Activated CD8-positive, alpha-beta memory T cell treated with anti-CD3 and anti-CD28 coated beads, Interleukin-2, amount 10 ng/mL, durations not matched to agents 7 days and 5 days (primary cell): ENCODE measurements at regions of chr1 and their contacts with region 1.

Region 1: DNA sequence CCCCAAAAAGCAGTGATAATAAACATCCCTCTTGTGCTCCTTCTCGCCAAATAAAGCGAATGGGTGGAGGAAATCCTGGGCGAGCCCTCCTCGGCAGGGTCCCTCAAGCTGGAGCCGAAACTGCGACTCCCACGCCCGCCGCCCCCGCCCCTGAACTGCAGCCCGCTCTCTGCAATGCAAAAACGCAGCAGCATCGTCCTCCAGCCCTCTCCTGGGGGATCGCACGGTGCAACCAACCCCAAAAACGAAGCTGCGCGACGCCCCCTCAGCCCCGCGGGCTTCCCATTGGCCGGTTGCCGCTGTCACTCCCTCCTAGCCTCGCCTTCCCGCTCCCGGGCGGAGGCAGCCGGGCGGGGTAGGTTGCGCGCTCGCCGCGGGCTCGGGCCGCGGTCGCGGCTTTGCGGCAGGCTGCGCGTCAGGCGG is at the start of gene TMCC2:
- DNase-seq: peak; percentile 90
- ATAC-seq: peak; percentile 95
- H3K4me3 Mint-ChIP-seq: peak within 1 kb of the TSS; percentile 91
- H3K27ac Mint-ChIP-seq: peak within 1 kb of the TSS; percentile 75
- H3K4me1 Mint-ChIP-seq: peaks cover 44% of the 10 kb centered on the region
- H3K27me3 Mint-ChIP-seq: peaks cover 48% of the 10 kb centered on the region
- total RNA-seq, gene TMCC2: 2.6 to 5.3 TPM

Region 2: GRCh38 chr1:204431310-204432165 is 796.1 kb before region 1 on chr1:
- CTCF ChIA-PET with region 1: no interaction called
- DNase-seq: peak; percentile 85
- ATAC-seq: peak; percentile 88
- H3K4me3 Mint-ChIP-seq: no peak overlapping the region
- H3K27ac Mint-ChIP-seq: peak overlapping the region; percentile 20
- H3K4me1 Mint-ChIP-seq: no peaks in the 10 kb centered on the region
- H3K27me3 Mint-ChIP-seq: no peaks in the 10 kb centered on the region

Region 3: DNA sequence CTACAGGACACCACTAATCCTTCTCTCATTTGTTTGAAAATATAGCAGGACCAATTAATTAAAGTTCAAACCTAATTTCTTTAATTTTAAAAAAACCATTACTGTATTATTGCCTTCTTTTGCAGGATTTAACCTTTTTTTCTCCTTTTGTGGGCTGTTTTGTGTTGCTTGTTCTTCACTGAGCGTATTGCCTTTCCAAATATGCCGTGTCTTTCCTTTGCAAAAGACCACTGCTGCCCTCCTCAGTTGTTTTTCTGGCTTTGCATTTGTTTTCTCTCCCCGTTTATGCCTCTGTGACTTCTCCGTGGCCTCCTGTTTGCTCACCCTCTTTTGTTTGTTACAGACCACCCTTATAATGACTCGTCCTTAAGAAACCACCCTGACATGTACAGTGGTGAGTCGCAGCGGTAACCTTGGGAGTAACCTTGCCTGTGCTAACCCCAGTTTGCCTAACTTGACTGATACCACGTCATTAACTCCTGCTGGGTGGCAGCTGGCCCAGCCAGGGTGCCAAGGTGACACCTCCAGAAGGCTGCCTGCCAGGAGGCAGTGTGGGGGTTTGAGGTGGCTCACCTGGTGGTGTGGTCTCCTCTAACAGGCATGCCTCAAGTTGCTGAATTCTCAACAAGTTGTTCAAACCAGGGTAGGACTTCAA is 265.7 kb before region 1 on chr1:
- CTCF ChIA-PET with region 1: no interaction called
- DNase-seq: no peak
- ATAC-seq: no peak
- H3K4me3 Mint-ChIP-seq: no peak overlapping the region
- H3K27ac Mint-ChIP-seq: no peak overlapping the region
- H3K4me1 Mint-ChIP-seq: no peaks in the 10 kb centered on the region
- H3K27me3 Mint-ChIP-seq: peaks cover 56% of the 10 kb centered on the region

Region 4: GRCh38 chr1:205121660-205122488 is 105.7 kb before region 1 on chr1 and contains the start of gene RBBP5:
- CTCF ChIA-PET with region 1: interaction called, 28 read pairs
- DNase-seq: peak; percentile 97
- ATAC-seq: peak; percentile 96
- H3K4me3 Mint-ChIP-seq: peak within 1 kb of the TSS; percentile 98
- H3K27ac Mint-ChIP-seq: peak within 1 kb of the TSS; percentile 96
- H3K4me1 Mint-ChIP-seq: peaks cover 40% of the 10 kb centered on the region
- H3K27me3 Mint-ChIP-seq: no peaks in the 10 kb centered on the region
- total RNA-seq, gene RBBP5: 22.8 to 23.0 TPM

Region 5: DNA sequence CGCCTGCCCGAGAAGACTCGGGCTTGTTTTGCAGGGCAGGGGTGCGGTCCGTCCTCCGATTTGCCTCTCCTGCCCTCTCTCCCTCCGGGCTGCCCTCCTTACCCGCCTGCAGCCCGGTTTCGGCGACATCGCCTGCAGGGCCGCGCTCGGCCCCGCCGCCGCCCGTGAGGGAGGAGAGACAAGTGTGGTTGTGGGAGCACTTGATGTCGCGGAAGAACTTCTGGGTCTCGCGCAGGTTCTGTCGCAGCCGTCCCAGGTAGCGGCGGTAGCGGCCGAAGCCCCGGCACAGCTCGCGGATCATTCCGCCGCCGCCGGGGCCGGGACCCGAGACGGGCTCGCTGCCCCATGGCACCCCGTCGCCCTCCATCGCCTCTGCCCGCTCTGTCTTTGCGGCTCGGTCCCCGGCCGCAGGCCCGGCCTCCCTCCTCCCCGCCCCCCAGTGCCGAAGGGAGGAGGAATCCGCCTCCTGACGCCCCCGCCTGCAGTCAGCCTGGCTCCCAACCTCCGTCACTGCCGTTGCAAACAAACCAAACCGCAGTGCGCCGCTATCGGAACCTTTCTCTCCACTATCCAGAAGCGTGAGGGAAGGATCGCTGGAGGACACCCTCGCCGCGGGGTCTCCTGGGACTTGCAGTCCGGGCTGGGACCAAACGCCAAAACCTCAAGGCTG is 16.3 kb before region 1 on chr1 and contains the start of gene DSTYK:
- CTCF ChIA-PET with region 1: interaction called, 14 read pairs
- DNase-seq: peak; percentile 95
- ATAC-seq: peak; percentile 90
- H3K4me3 Mint-ChIP-seq: peak within 1 kb of the TSS; percentile 89
- H3K27ac Mint-ChIP-seq: peak within 1 kb of the TSS; percentile 88
- H3K4me1 Mint-ChIP-seq: peaks cover 50% of the 10 kb centered on the region
- H3K27me3 Mint-ChIP-seq: no peaks in the 10 kb centered on the region
- total RNA-seq, gene DSTYK: 8.7 to 11.6 TPM

Region 6: DNA sequence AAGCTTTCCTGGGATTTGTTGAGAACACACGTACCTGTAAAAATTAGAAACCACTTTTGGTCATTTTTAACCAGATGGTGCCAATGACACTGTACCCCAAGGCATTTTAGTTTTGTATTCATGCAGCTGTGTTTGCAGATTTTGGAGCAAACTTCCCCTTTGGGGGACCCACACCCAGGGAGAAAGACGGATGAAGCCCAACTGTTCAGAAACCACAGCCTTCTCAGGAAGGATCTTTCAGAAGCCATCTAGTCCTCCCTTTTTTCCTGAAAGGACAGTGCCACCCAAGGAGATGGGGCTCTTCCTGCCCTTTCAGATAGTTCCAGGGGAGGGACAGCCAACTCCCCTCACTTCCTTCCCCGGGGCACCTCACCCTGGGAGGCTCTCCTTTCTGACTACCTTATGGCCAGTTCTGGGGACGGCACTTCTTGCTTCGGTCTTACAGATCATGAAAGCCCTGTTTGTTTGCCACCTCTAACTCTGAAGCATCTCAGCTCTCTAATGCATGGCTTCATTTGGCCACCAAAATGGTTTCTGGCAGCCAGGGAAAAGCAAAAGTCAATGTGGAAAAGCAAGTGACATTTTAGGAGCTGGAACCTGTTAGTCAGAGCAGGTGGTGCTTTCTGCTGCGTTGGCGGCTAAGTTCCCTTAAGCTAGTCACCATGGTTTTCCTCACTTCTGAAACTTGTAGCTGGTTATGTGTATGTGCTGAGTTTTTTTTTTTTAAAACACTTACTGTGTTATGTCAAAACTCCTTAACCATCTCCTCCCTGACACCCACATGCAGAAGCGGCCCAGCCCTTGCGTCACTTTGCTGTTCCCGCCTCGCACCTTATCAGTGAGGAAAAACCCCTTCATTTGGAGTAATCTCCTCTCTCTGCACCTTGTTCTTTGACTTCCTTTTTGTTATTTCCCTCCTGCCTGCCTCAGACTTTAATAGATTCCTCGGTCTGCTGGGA is 10.2 kb after region 1 on chr1:
- CTCF ChIA-PET with region 1: interaction called, 20 read pairs
- DNase-seq: peak; percentile 39
- ATAC-seq: no peak
- H3K4me3 Mint-ChIP-seq: no peak overlapping the region
- H3K27ac Mint-ChIP-seq: no peak overlapping the region
- H3K4me1 Mint-ChIP-seq: peaks cover 11% of the 10 kb centered on the region
- H3K27me3 Mint-ChIP-seq: peaks cover 21% of the 10 kb centered on the region

Region 7: GRCh38 chr1:205243350-205244191 is 16.0 kb after region 1 on chr1:
- CTCF ChIA-PET with region 1: interaction called, 22 read pairs
- DNase-seq: no peak
- ATAC-seq: no peak
- H3K4me3 Mint-ChIP-seq: no peak overlapping the region
- H3K27ac Mint-ChIP-seq: no peak overlapping the region
- H3K4me1 Mint-ChIP-seq: peaks cover 19% of the 10 kb centered on the region
- H3K27me3 Mint-ChIP-seq: peaks cover 5% of the 10 kb centered on the region

Region 8: DNA sequence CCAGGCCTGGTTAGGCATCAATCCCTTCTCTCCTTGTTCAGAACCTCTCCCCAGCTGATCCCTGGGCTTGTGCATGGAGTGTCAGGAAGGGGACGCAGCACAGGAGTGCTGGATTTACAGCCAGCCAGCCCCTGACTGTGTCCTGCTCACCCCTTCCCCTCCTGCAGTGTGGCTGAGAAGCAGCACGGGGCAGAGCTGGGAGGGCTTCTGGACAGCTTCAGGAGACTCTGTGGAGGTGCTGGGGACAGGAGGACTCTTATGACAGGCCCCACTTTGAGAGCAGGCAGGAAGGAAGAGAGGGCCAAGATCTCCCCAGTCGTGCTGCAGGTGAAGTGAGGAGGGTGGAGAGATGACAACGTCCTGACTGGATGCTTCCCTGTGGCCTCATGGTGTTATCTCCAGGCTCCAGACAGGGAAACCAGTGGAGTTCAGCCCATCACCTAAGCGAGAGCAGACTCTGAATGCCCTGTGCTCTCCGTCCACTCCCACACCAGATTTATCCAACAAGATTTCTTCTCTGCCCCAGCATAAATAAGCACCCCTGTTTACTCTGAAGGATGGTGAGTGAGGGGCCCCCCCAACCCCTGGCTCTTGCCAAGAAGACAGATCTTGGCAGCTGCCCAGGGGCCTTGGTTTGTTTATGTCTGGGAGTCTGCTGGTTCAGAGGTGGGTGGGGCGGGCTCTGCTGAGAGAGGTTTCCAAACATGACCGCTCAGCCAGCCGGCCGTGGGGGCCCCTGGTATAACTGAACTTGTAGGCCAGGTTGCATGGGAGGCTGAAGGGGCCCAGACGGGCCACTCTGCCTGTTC is 21.4 kb after region 1 on chr1:
- CTCF ChIA-PET with region 1: interaction called, 207 read pairs
- DNase-seq: no peak
- ATAC-seq: no peak
- H3K4me3 Mint-ChIP-seq: no peak overlapping the region
- H3K27ac Mint-ChIP-seq: no peak overlapping the region
- H3K4me1 Mint-ChIP-seq: peaks cover 19% of the 10 kb centered on the region
- H3K27me3 Mint-ChIP-seq: peaks cover 2% of the 10 kb centered on the region

Region 9: GRCh38 chr1:205359771-205360565 is 132.4 kb after region 1 on chr1:
- CTCF ChIA-PET with region 1: no interaction called
- DNase-seq: no peak
- ATAC-seq: no peak
- H3K4me3 Mint-ChIP-seq: no peak overlapping the region
- H3K27ac Mint-ChIP-seq: no peak overlapping the region
- H3K4me1 Mint-ChIP-seq: no peaks in the 10 kb centered on the region
- H3K27me3 Mint-ChIP-seq: peaks cover 45% of the 10 kb centered on the region

Region 10: DNA sequence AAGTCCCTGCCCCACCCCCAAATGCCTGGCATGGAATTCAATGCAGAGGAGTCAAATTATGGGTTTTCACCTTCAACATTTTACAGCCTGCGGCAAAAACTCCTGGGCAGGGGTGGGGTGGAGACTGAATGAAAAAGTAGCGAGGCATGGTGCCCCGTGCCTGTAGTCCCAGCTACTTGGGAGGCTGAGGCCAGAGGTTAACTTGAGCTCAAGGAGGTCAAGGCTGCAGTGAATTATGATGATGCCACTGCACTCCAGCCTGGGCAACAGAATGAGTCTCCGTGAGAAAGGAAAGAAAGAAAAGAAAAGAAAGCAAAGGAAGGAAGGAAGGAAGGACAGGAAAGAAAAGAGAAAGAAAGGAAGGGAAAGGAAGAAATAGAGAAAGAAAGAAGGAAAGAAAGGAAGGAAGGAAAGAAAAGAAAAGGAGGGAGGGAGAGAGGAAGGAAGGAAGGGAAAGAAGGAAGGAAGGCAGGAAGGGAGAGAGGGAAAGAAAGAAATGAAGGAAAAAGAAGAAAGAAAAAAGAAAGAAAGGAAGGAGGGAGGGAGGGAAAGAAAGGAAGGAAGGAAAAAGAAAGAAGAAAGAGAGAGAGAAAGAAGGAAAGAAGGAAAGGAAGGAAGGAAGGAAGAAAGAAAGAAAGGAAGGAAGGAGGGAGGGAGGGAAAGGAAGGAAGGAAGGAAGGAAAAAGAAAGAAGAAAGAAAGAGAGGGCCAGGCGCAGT is 183.1 kb after region 1 on chr1:
- CTCF ChIA-PET with region 1: no interaction called
- DNase-seq: no peak
- ATAC-seq: no peak
- H3K4me3 Mint-ChIP-seq: no peak overlapping the region
- H3K27ac Mint-ChIP-seq: no peak overlapping the region
- H3K4me1 Mint-ChIP-seq: peaks cover 2% of the 10 kb centered on the region
- H3K27me3 Mint-ChIP-seq: peaks cover 23% of the 10 kb centered on the region